IMR-90 (cell line): ENCODE measurements at regions of chr4 and their contacts with region 1.

Region 1: DNA sequence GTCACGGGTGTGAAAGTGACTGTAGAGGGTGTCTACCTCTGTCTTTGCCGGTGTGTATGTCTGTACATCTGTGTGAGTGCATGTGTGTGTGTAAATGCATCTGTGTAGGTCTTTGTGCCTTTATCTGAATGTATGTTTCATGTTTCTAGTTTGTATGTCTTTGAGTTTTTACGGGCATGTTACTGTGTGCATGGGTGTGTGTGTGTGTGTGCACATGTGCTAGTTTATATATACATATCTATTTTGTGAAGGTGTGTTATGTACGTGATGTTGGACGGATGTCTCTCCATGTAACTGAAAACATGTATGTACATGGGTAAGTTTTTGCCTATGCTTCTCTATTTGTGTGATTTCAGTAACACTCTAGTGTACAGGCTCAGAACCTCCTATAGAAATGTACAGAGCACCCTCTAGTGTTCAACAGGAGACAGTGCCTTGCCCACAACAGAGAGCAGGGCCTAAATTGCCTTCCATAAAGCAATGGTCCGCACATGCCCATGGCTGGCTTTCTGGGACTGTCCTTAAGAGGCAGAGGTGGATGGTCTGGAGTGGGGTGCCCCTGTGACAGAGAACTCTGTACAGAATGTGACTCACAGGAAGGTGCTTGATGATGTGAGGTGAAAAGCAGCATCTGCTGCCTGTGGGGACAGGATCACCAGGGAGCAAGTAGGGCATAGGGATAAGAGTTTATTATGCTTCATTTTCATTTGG is 343.5 kb downstream of the RAPGEF2 start:
- DNase-seq: peak; percentile 84
- ATAC-seq: peak; percentile 94
- H3K4me3 ChIP-seq: no peak overlapping the region
- H3K27ac ChIP-seq: no peak overlapping the region
- H3K4me1 ChIP-seq: peaks cover 3% of the 10 kb centered on the region
- H3K27me3 ChIP-seq: no peaks in the 10 kb centered on the region
- CTCF ChIP-seq: peak; percentile 94
- POLR2A ChIP-seq: no peak
- RAD21 ChIP-seq: peak; percentile 97

Region 2: GRCh38 chr4:158722917-158723793 is 723.3 kb before region 1 on chr4 and contains the start of gene PPID:
- CTCF ChIA-PET with region 1: no interaction called
- POLR2A ChIA-PET with region 1: no interaction called
- dilution Hi-C with region 1: no loop called
- in situ Hi-C with region 1: loop called (anchors 10 kb)
- intact Hi-C with region 1: no loop called
- DNase-seq: peak; percentile 70
- ATAC-seq: peak; percentile 95
- H3K4me3 ChIP-seq: peak within 1 kb of the TSS; percentile 75
- H3K27ac ChIP-seq: peak within 1 kb of the TSS; percentile 94
- H3K4me1 ChIP-seq: no peaks in the 10 kb centered on the region; the same call in 1 of the 2 replicates
- H3K27me3 ChIP-seq: no peaks in the 10 kb centered on the region
- CTCF ChIP-seq: no peak
- POLR2A ChIP-seq: peak; percentile 89
- RAD21 ChIP-seq: no peak
- total RNA-seq, gene PPID: 11.8 and 22.8 TPM in 2 replicates

Region 3: DNA sequence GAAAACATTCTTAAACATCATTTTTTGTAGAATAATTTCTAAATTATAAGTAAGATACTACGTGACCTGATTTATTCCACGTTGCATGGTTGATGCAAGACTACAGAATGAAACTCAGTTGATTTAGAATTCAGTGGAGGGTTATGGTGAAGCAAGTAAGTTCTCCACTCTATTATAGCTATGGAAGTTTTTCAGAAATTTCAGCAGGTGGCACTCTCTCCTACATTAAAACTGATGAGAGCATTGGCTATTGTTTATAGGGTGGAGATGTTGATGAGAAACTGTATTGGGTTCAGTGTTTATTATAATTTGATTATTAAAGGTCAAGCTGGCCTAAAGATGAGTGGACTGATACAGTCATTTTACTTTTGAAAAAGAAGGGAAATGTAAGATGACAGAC is 589.6 kb before region 1 on chr4:
- CTCF ChIA-PET with region 1: no interaction called
- POLR2A ChIA-PET with region 1: no interaction called
- dilution Hi-C with region 1: no loop called
- in situ Hi-C with region 1: loop called (anchors 5 kb)
- intact Hi-C with region 1: loop called (anchors 1 kb)
- DNase-seq: peak; percentile 68
- ATAC-seq: peak; percentile 92
- H3K4me3 ChIP-seq: no peak overlapping the region
- H3K27ac ChIP-seq: no peak overlapping the region
- H3K4me1 ChIP-seq: no peaks in the 10 kb centered on the region
- H3K27me3 ChIP-seq: no peaks in the 10 kb centered on the region
- CTCF ChIP-seq: peak; percentile 73
- POLR2A ChIP-seq: no peak
- RAD21 ChIP-seq: peak; percentile 79

Region 4: GRCh38 chr4:159102622-159103383 is 343.6 kb before region 1 on chr4 and contains the start of gene RAPGEF2:
- CTCF ChIA-PET with region 1: no interaction called
- POLR2A ChIA-PET with region 1: no interaction called
- dilution Hi-C with region 1: no loop called
- in situ Hi-C with region 1: no loop called
- intact Hi-C with region 1: loop called (anchors 2 kb)
- DNase-seq: peak; percentile 91
- ATAC-seq: peak; percentile 87
- H3K4me3 ChIP-seq: peak within 1 kb of the TSS; percentile 88
- H3K27ac ChIP-seq: peak within 1 kb of the TSS; percentile 40
- H3K4me1 ChIP-seq: peaks cover 2% of the 10 kb centered on the region
- H3K27me3 ChIP-seq: peaks cover 14% of the 10 kb centered on the region
- CTCF ChIP-seq: no peak
- POLR2A ChIP-seq: peak; percentile 93
- RAD21 ChIP-seq: peak; percentile 12; the same call in 1 of the 2 replicates
- total RNA-seq, gene RAPGEF2: 109 and 126 TPM in 2 replicates

Region 5: GRCh38 chr4:159129814-159130550 is 316.4 kb before region 1 on chr4:
- CTCF ChIA-PET with region 1: no interaction called
- POLR2A ChIA-PET with region 1: no interaction called
- dilution Hi-C with region 1: no loop called
- in situ Hi-C with region 1: no loop called
- intact Hi-C with region 1: no loop called
- DNase-seq: no peak
- ATAC-seq: no peak
- H3K4me3 ChIP-seq: no peak overlapping the region
- H3K27ac ChIP-seq: no peak overlapping the region
- H3K4me1 ChIP-seq: peaks cover 2% of the 10 kb centered on the region; the same call in 1 of the 2 replicates
- H3K27me3 ChIP-seq: no peaks in the 10 kb centered on the region
- CTCF ChIP-seq: no peak
- POLR2A ChIP-seq: no peak
- RAD21 ChIP-seq: no peak

Region 6: GRCh38 chr4:159201168-159201567 is 245.3 kb before region 1 on chr4:
- CTCF ChIA-PET with region 1: no interaction called
- POLR2A ChIA-PET with region 1: no interaction called
- dilution Hi-C with region 1: no loop called
- in situ Hi-C with region 1: loop called (anchors 5 kb)
- intact Hi-C with region 1: loop called (anchors 1 kb)
- DNase-seq: no peak
- ATAC-seq: no peak
- H3K4me3 ChIP-seq: no peak overlapping the region
- H3K27ac ChIP-seq: no peak overlapping the region
- H3K4me1 ChIP-seq: no peaks in the 10 kb centered on the region; the same call in 1 of the 2 replicates
- H3K27me3 ChIP-seq: no peaks in the 10 kb centered on the region
- CTCF ChIP-seq: no peak
- POLR2A ChIP-seq: no peak
- RAD21 ChIP-seq: no peak

Region 7: GRCh38 chr4:159297091-159297490 is 149.3 kb before region 1 on chr4:
- CTCF ChIA-PET with region 1: no interaction called
- POLR2A ChIA-PET with region 1: no interaction called
- dilution Hi-C with region 1: no loop called
- in situ Hi-C with region 1: no loop called
- intact Hi-C with region 1: loop called (anchors 1 kb)
- DNase-seq: peak; percentile 28
- ATAC-seq: 0 out of 2 replicates have a peak, but pooled peaks have one; percentile 9
- H3K4me3 ChIP-seq: no peak overlapping the region
- H3K27ac ChIP-seq: no peak overlapping the region
- H3K4me1 ChIP-seq: peaks cover 12% of the 10 kb centered on the region
- H3K27me3 ChIP-seq: no peaks in the 10 kb centered on the region
- CTCF ChIP-seq: no peak
- POLR2A ChIP-seq: no peak
- RAD21 ChIP-seq: no peak; the same call in 1 of the 2 replicates

Region 8: GRCh38 chr4:159390648-159391047 is 55.8 kb before region 1 on chr4:
- CTCF ChIA-PET with region 1: no interaction called
- POLR2A ChIA-PET with region 1: no interaction called
- dilution Hi-C with region 1: no loop called
- in situ Hi-C with region 1: no loop called
- intact Hi-C with region 1: no loop called
- DNase-seq: peak; percentile 98
- ATAC-seq: peak; percentile 80
- H3K4me3 ChIP-seq: no peak overlapping the region
- H3K27ac ChIP-seq: peak overlapping the region; percentile 66
- H3K4me1 ChIP-seq: peaks cover 3% of the 10 kb centered on the region; the same call in 1 of the 2 replicates
- H3K27me3 ChIP-seq: no peaks in the 10 kb centered on the region
- CTCF ChIP-seq: no peak
- POLR2A ChIP-seq: no peak
- RAD21 ChIP-seq: no peak

Region 9: DNA sequence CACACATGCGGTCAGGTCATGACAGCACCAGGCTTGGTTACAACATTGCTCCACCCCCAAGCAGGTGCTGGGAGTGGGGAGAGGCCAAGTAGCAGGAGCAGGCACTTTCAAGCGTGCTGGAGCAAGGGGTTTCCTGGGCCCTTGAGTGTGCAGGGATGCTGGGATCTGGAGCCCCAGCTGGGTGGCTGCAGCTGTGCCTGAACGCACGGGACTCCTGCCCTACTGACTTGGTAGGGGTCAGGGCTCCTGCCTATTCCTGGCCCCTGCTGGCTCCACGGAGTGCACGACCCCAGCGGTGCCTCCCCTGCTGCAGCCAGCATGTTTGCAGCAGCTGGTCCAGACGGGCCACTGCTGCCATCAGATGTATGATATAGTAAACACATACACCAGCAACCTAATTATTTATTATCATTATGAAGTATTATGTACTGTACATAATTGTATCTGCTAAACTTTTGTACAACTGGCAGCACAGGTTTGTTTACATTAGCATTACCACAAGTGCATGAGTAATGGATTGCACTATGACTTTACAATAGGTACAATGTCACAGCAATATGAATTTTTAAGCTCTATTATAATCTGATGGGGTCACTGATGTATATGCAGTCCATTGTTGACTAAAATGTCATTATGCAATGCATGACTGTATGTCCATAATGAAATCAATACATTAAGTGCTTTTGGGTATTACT is 277.1 kb after region 1 on chr4:
- CTCF ChIA-PET with region 1: no interaction called
- POLR2A ChIA-PET with region 1: no interaction called
- dilution Hi-C with region 1: no loop called
- in situ Hi-C with region 1: no loop called
- intact Hi-C with region 1: no loop called
- DNase-seq: no peak
- ATAC-seq: no peak
- H3K4me3 ChIP-seq: no peak overlapping the region
- H3K27ac ChIP-seq: no peak overlapping the region
- H3K4me1 ChIP-seq: no peaks in the 10 kb centered on the region
- H3K27me3 ChIP-seq: no peaks in the 10 kb centered on the region
- CTCF ChIP-seq: no peak
- POLR2A ChIP-seq: no peak
- RAD21 ChIP-seq: no peak